ENCODE measurements at regions of chr17 and their contacts with region 1.

Region 1: DNA sequence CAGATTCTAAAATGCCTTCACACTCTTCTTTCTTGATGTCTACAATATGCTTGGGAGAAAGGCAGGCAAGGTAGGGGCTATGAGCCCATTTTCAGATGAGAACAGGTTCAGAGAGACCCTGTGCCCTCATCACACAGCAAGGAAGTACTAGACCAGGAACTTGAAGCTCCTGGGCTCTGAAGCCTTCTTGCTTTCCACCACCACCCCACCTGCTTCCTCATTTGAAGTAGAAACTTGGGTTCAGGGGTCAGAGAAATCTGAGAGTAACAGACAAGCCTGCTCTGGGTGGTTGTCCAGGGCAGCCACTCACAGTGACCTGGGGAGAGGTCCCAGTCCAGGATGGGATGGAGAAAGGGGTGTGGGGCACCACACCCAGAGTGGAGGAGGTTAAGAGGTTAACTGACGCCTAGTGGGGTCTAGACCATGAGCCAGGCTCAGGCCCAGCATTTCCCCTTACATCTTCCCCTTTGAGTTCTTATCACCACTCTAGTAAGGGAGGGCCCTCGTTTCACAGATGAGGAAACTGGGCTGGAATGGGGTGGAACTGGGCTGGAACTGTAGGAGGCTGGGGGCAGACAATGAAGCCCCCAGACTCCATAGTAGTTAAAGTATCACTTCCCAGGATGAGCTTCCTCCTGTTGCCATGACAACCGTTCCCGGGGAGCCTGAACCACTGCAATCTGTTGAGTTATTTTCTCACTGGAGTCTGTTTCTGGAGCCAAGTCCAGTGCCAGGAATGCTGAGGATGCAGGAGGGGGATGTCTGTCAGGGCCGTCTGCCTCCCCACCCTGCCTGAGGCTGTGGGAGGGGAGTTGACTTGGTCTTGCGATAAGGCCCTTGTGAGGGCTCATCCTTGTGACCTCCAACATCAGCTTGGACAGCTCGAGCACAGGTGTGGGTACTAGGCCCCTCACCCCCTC is 16.2 kb upstream of the PHF12 start:
- DNase-seq: no peak
- H3K4me3 ChIP-seq: no peak overlapping the region
- H3K27ac ChIP-seq: no peak overlapping the region
- H3K4me1 ChIP-seq: peaks cover 11% of the 10 kb centered on the region
- H3K27me3 ChIP-seq: no peaks in the 10 kb centered on the region
- CTCF ChIP-seq: no peak
- EP300 ChIP-seq: no peak
- POLR2A ChIP-seq: no peak

Region 2: GRCh38 chr17:28728364-28729088 is 239.0 kb before region 1 on chr17 and contains the start of gene NEK8:
- intact Hi-C with region 1: no loop called
- DNase-seq: peak; percentile 94 to 98 (median 97)
- H3K4me3 ChIP-seq: peak within 1 kb of the TSS; percentile 86
- H3K27ac ChIP-seq: peak within 1 kb of the TSS; percentile 89 to 95
- H3K4me1 ChIP-seq: peaks cover 5% of the 10 kb centered on the region
- H3K27me3 ChIP-seq: no peaks in the 10 kb centered on the region
- CTCF ChIP-seq: no peak
- EP300 ChIP-seq: peak; percentile 6
- POLR2A ChIP-seq: peak; percentile 75
- total RNA-seq, gene NEK8: 2.3 to 8.3 (median 3.4) TPM

Region 3: GRCh38 chr17:28902819-28903545 is 64.5 kb before region 1 on chr17 and contains the start of gene DHRS13:
- intact Hi-C with region 1: no loop called
- DNase-seq: peak; percentile 85 to 93 (median 92)
- H3K4me3 ChIP-seq: peak within 1 kb of the TSS; percentile 53
- H3K27ac ChIP-seq: peak within 1 kb of the TSS; percentile 69 to 79
- H3K4me1 ChIP-seq: peaks cover under 1% of the 10 kb centered on the region
- H3K27me3 ChIP-seq: no peaks in the 10 kb centered on the region
- CTCF ChIP-seq: peak; percentile 68 to 90 (median 85)
- EP300 ChIP-seq: no peak
- POLR2A ChIP-seq: no peak
- total RNA-seq, gene DHRS13: 7.3 to 13.8 (median 8.1) TPM

Region 4: GRCh38 chr17:28916302-28916934 is 51.1 kb before region 1 on chr17:
- intact Hi-C with region 1: no loop called
- DNase-seq: peak in 2 of 5 donors; percentile 52 to 54
- H3K4me3 ChIP-seq: no peak overlapping the region
- H3K27ac ChIP-seq: no peak overlapping the region
- H3K4me1 ChIP-seq: no peaks in the 10 kb centered on the region
- H3K27me3 ChIP-seq: no peaks in the 10 kb centered on the region
- CTCF ChIP-seq: peak; percentile 16 to 48 (median 42)
- EP300 ChIP-seq: no peak
- POLR2A ChIP-seq: no peak

Region 5: DNA sequence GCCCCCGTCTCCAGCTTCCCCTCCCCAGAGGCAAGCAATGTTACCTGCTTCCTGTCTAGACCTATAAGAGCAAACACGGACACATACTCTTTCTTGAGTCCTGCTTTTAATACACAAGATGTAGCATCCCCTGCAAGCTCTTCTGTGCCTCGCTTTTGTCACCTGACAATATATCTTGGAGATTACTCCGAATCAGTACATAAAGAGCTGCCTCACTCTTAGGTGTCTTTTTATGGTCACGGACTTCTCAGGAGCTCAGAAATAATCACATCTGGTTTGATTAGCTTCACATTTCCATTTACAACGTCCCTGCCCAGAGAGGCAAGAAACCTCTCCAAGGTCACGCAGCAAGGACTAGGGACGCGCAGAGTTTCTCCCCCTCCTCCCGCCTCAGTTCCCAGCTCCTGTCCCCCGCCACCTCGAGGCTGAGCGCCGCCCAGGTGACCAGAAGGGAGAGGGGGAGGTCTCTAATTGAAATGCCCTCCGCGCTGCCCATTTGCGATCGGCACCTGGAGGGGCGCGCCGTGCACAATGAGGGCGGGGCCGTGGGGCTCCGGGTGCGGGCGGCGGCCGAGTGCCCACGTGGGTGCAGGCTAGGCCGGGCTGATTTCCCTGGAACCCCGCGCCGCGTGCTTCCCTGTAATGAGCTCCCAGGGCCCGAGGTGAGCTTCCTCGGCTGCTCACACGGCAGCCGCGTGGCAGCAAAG is 52.1 kb after region 1 on chr17:
- intact Hi-C with region 1: loop called in 1 of 4 experiments (anchors 10 kb)
- DNase-seq: no peak
- H3K4me3 ChIP-seq: no peak overlapping the region
- H3K27ac ChIP-seq: no peak overlapping the region
- H3K4me1 ChIP-seq: peaks cover 2% of the 10 kb centered on the region
- H3K27me3 ChIP-seq: no peaks in the 10 kb centered on the region
- CTCF ChIP-seq: no peak
- EP300 ChIP-seq: no peak
- POLR2A ChIP-seq: no peak

Region 6: GRCh38 chr17:29036584-29036983 is 69.1 kb after region 1 on chr17:
- intact Hi-C with region 1: no loop called
- DNase-seq: no peak
- H3K4me3 ChIP-seq: no peak overlapping the region
- H3K27ac ChIP-seq: no peak overlapping the region
- H3K4me1 ChIP-seq: peaks cover 2% of the 10 kb centered on the region
- H3K27me3 ChIP-seq: no peaks in the 10 kb centered on the region
- CTCF ChIP-seq: no peak
- EP300 ChIP-seq: no peak
- POLR2A ChIP-seq: no peak

Region 7: GRCh38 chr17:29111816-29112499 is 144.5 kb after region 1 on chr17:
- intact Hi-C with region 1: loop called (anchors 2 to 5 kb)
- DNase-seq: peak; percentile 53 to 83 (median 73)
- H3K4me3 ChIP-seq: no peak overlapping the region
- H3K27ac ChIP-seq: no peak overlapping the region
- H3K4me1 ChIP-seq: peaks cover 1% of the 10 kb centered on the region
- H3K27me3 ChIP-seq: no peaks in the 10 kb centered on the region
- CTCF ChIP-seq: peak; percentile 55 to 84 (median 70)
- EP300 ChIP-seq: no peak
- POLR2A ChIP-seq: no peak

Region 8: GRCh38 chr17:29524460-29525091 is 557.1 kb after region 1 on chr17:
- intact Hi-C with region 1: loop called in 1 of 4 experiments (anchors 10 kb)
- DNase-seq: no peak
- H3K4me3 ChIP-seq: no peak overlapping the region
- H3K27ac ChIP-seq: no peak overlapping the region
- H3K4me1 ChIP-seq: no peaks in the 10 kb centered on the region
- H3K27me3 ChIP-seq: no peaks in the 10 kb centered on the region
- CTCF ChIP-seq: no peak
- EP300 ChIP-seq: no peak
- POLR2A ChIP-seq: no peak

Measured in ovary (tissue), 10 donors.